ENCODE measurements at regions of chr14 and their contacts with region 1.

Region 1: DNA sequence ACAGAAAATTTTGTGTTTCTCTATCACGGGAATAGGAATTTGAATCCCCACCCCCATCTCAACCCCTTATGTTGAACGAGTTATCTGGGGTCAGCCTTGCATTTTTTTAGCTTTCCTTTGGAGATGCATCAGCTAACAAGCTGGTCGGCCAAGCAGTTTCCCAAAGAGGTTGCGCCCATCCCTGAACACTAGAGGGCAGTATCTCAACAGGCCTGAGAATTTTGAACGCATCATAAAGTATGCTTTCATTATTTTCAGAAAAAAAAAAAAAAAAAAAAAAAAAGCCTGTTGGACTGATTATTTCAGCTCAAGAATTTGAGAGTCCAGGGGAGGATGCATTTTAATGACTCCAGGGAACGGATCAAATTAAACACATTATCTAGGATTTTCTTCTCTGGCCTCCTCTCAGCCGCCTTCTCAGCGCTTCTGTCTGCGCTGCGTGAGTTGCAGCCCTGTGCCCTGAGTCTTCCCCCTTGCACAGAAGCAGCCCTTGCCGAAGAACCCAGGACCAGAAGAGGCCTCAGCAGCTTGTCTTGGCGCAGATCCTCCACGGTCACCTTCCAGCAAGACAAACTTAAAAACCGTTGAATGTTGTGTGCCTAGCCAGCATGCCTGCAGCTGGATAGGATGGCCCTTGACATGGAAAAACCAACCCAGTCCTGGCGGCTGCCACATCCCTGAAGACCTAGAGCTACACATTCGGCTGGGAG is 76.6 kb upstream of the GZMB start:
- DNase-seq: peak; percentile 77
- ATAC-seq: peak; percentile 81
- H3K4me3 Mint-ChIP-seq: no peak overlapping the region
- H3K27ac Mint-ChIP-seq: no peak overlapping the region
- H3K4me1 Mint-ChIP-seq: peaks cover 18% of the 10 kb centered on the region
- H3K27me3 Mint-ChIP-seq: peaks cover 13% of the 10 kb centered on the region

Region 2: GRCh38 chr14:23421594-23421993 is 1289.0 kb before region 1 on chr14:
- CTCF ChIA-PET with region 1: no interaction called
- POLR2A ChIA-PET with region 1: no interaction called
- DNase-seq: peak; percentile 25
- ATAC-seq: peak; percentile 61
- H3K4me3 Mint-ChIP-seq: no peak overlapping the region
- H3K27ac Mint-ChIP-seq: no peak overlapping the region
- H3K4me1 Mint-ChIP-seq: peaks cover 18% of the 10 kb centered on the region
- H3K27me3 Mint-ChIP-seq: no peaks in the 10 kb centered on the region

Region 3: GRCh38 chr14:24605435-24606190 is 104.9 kb before region 1 on chr14:
- CTCF ChIA-PET with region 1: interaction called, 42 read pairs
- POLR2A ChIA-PET with region 1: no interaction called
- DNase-seq: peak; percentile 87
- ATAC-seq: peak; percentile 89
- H3K4me3 Mint-ChIP-seq: peak overlapping the region; percentile 72
- H3K27ac Mint-ChIP-seq: peak overlapping the region; percentile 93
- H3K4me1 Mint-ChIP-seq: peaks cover 58% of the 10 kb centered on the region
- H3K27me3 Mint-ChIP-seq: peaks cover 2% of the 10 kb centered on the region

Region 4: DNA sequence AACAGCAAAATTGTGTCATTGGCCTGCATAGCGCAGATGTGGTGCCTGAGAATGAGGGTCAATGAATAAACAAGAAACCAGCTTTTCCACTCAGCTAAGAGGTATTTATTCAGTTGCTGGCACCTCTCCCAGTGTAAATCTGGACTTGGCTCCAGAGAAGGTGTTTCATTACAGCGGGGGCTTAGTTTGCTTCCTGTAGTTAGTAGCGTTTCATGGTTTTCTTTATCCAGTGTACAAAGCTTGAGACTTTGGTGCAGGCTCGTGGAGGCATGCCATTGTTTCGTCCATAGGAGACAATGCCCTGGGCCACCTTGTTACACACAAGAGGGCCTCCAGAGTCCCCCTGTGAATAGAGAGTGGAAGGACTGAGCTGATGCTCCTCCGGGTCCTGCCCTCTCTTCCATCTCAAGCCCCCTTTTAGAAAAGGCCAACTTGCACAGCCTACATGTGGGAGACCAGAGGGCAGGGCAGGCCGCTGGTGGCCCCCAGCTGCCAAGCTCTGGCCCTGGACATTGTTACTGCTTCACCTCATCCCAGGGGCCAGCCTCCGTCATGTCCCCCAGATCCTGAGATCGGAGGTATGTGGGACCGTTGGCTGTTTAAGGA is 79.6 kb before region 1 on chr14:
- CTCF ChIA-PET with region 1: interaction called, 15 read pairs
- POLR2A ChIA-PET with region 1: no interaction called
- DNase-seq: no peak
- ATAC-seq: no peak
- H3K4me3 Mint-ChIP-seq: peak overlapping the region; percentile 93
- H3K27ac Mint-ChIP-seq: peak overlapping the region; percentile 98
- H3K4me1 Mint-ChIP-seq: peaks cover 74% of the 10 kb centered on the region
- H3K27me3 Mint-ChIP-seq: no peaks in the 10 kb centered on the region

Region 5: DNA sequence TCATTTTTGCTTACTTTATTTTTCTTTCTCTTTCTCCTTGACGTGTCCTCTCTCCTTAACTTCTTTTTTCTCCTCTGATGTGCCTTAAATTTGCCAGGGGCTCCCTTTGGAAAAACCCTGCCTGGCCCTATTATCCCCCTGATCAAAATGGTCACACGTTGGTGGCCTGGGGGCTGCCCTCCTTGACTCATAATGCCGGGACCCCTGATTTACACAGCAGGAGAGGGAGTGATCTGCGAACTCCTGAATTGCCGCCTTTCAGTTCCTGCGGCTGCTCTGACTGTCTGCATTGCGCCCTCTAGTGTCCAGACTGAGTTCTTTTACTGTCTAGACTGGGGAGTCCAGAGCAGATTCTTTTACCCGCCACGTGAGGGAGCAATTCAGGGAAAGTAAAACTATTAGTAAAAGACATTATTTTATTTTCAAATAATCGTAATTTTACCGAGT is 31.7 kb before region 1 on chr14:
- CTCF ChIA-PET with region 1: interaction called, 50 read pairs
- POLR2A ChIA-PET with region 1: no interaction called
- DNase-seq: peak; percentile 92
- ATAC-seq: peak; percentile 73
- H3K4me3 Mint-ChIP-seq: peak overlapping the region; percentile 77
- H3K27ac Mint-ChIP-seq: peak overlapping the region; percentile 93
- H3K4me1 Mint-ChIP-seq: peaks cover 71% of the 10 kb centered on the region
- H3K27me3 Mint-ChIP-seq: no peaks in the 10 kb centered on the region

Region 6: GRCh38 chr14:24699052-24699451 is 11.5 kb before region 1 on chr14:
- CTCF ChIA-PET with region 1: interaction called, 87 read pairs
- POLR2A ChIA-PET with region 1: no interaction called
- DNase-seq: no peak
- ATAC-seq: no peak
- H3K4me3 Mint-ChIP-seq: no peak overlapping the region
- H3K27ac Mint-ChIP-seq: peak overlapping the region; percentile 73
- H3K4me1 Mint-ChIP-seq: peaks cover 32% of the 10 kb centered on the region
- H3K27me3 Mint-ChIP-seq: no peaks in the 10 kb centered on the region

Region 7: GRCh38 chr14:24806061-24806678 is 95.6 kb after region 1 on chr14:
- CTCF ChIA-PET with region 1: interaction called, 13 read pairs
- POLR2A ChIA-PET with region 1: no interaction called
- DNase-seq: peak; percentile 61
- ATAC-seq: peak; percentile 51
- H3K4me3 Mint-ChIP-seq: no peak overlapping the region
- H3K27ac Mint-ChIP-seq: no peak overlapping the region
- H3K4me1 Mint-ChIP-seq: no peaks in the 10 kb centered on the region
- H3K27me3 Mint-ChIP-seq: peaks cover 15% of the 10 kb centered on the region

Region 8: GRCh38 chr14:24900269-24901100 is 189.9 kb after region 1 on chr14:
- CTCF ChIA-PET with region 1: no interaction called
- POLR2A ChIA-PET with region 1: no interaction called
- DNase-seq: no peak
- ATAC-seq: no peak
- H3K4me3 Mint-ChIP-seq: no peak overlapping the region
- H3K27ac Mint-ChIP-seq: no peak overlapping the region
- H3K4me1 Mint-ChIP-seq: no peaks in the 10 kb centered on the region
- H3K27me3 Mint-ChIP-seq: peaks cover 11% of the 10 kb centered on the region

Region 9: DNA sequence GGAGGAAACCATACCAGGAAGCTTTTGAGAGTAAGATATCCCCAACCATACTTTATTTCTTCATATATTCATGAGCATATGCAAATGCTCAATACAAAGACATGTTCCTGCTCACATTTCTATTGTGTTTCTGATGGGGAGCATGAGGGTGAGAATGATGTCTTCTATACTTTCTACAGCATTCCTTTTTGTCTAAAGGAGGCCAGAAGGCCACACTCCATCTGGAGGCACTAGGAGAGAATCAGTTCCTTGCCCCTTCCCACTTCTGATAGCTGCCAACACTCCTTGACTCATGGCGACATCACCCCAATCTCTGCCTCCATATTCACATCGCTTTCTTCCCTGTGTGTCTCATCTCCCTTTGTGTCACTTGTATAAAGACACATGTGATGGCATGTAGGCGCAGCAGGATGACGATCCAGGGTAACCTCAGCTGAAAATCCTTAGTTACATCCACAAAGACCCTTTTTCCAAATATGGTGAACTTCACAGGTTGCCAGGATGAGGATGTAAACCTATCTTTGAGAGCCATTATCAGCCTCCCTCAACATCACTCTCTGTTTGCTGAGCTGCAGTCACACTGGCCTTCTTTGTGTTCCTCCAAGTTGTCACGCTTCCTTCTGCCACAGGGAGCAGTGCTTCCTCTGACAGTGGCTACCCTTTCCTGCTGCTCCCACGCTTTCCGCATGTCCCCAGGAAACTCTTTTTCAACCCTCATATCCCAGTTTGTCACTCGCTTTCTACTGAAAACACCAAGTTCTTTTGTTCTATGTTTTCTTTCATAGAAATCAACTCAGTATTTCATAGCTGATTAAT is 242.5 kb after region 1 on chr14:
- CTCF ChIA-PET with region 1: no interaction called
- POLR2A ChIA-PET with region 1: no interaction called
- DNase-seq: no peak
- ATAC-seq: no peak
- H3K4me3 Mint-ChIP-seq: no peak overlapping the region
- H3K27ac Mint-ChIP-seq: no peak overlapping the region
- H3K4me1 Mint-ChIP-seq: no peaks in the 10 kb centered on the region
- H3K27me3 Mint-ChIP-seq: peaks cover under 1% of the 10 kb centered on the region

Measured in activated CD8-positive, alpha-beta T cell treated with anti-CD3 and anti-CD28 coated beads, Interleukin-2, amount 10 ng/mL, durations not matched to agents 7 days and 5 days (primary cell).